Right ventricle myocardium superior (tissue), 1 donor: ENCODE measurements at regions of chr1 and their contacts with region 1.

Region 1: GRCh38 chr1:246497331-246497915 is 9.7 kb downstream of the SMYD3 start:
- DNase-seq: no peak
- ATAC-seq: peak; percentile 27

Region 2: DNA sequence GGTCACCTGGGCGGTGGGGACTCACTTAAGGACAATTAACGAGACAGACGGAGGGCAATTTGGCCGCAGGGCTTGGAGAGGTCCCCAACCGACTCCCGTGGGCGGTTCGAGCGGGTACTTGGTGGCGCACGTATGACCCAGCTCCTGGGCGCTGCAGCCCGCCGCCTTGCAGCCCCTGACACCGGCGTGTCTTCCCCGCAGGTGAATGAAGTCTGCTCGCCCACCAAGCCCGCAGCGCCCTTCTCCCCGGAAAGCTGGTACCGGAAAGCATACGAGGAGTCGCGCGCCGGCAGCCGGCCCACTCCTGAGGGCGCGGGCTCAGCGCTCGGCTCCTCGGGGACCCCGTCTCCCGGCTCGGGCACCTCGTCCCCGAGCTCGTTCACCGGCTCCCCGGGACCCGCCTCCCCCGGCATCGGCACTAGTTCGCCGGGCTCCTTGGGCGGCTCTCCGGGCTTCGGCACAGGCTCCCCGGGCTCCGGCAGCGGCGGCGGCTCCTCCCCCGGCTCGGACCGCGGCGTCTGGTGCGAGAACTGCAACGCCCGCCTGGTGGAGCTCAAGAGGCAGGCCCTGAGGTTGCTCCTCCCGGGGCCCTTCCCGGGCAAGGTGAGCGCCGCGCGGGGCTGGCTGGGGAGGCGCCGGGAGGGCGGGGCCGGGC is 1341.2 kb before region 1 on chr1:
- intact Hi-C with region 1: loop called (anchors 10 kb)
- DNase-seq: peak; percentile 88
- ATAC-seq: peak; percentile 89

Region 3: GRCh38 chr1:246012341-246012740 is 485.1 kb before region 1 on chr1:
- intact Hi-C with region 1: loop called (anchors 10 kb)
- DNase-seq: no peak
- ATAC-seq: peak; percentile 71

Region 4: DNA sequence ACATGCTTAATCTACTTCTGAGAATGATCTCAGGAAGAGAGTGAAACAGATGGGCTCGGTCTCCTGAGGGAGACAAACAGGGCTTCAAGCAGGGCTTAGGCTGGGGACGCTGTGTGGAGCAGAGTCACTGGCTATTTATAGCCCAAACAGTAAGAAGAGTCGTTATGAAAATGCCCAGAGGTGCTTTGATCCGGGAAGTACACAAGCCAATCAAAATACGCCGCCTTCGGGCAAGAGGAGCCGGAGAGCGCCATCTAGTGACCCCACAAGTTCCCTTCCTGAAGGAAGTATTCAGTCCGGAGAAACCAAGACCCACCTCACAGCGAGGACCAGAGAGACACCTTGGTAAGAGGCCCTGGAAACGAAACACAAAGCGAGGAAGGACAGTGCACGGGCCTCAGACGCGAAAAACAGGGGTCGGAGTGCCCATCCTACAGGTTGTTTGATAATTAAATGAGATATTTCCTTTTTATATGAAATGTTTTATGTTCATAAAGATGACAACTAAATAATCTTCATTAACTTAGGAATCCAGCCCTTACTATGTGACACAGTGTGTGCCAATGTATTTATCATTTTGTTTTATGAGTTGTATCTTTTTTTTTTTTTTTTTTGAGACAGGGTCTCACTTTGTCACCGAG is 201.8 kb after region 1 on chr1:
- intact Hi-C with region 1: loop called (anchors 5 kb)
- DNase-seq: peak; percentile 88
- ATAC-seq: peak; percentile 94

Region 5: GRCh38 chr1:246753670-246754535 is 256.5 kb after region 1 on chr1:
- intact Hi-C with region 1: loop called (anchors 5 kb)
- DNase-seq: peak; percentile 54
- ATAC-seq: peak; percentile 87

Region 6: GRCh38 chr1:247228133-247228532 is 730.7 kb after region 1 on chr1:
- intact Hi-C with region 1: no loop called
- DNase-seq: no peak
- ATAC-seq: no peak